MCF 10A (cell line): ENCODE measurements at regions of chr3 and their contacts with region 1.

Region 1: DNA sequence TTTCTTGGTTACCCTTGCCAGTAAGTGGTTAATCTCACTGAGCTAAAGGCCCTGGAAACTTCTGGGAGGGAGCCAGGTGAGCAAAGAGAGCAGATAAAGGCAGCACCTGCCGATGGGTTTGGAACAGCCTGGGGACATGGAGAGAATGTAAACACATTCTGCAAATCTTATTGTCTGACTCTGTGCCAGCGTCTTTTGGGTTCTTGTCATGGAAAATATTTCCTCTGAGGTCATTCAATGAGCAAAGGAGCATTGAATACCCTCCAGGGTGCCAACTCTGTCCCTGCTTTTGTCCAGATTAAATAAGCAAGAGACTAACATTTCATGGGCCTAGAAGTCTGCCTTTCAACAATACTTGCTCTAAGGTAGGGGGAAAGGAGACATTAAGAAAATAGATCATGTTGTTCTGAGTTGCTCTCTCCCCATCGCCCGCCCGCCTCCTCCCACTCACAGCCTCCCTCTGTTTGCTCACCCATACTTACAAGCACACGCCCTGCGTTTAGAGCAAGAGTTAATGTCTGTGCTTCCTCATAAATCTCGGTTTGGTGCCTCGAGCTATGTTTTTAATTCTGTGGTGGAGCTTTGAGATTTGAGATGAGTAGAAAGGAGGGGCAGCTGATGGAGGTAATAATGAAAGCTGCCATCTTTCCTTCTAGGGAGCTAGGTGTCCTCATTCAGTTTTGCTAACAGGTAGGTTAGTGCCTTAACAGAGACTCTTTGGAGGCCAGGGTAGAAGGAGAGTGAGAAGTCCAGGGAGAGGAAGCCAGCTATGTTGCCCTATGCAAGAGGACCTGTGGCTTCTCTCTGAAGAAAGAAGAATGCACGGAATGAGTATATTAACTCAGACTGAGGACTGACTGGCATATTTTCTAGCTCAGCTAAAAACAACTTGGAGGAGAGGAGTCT is 132.9 kb downstream of the TPRG1 start:
- DNase-seq: peak; percentile 96
- H3K4me3 Mint-ChIP-seq: peak overlapping the region; percentile 65
- H3K27ac Mint-ChIP-seq: peak overlapping the region; percentile 99
- H3K4me1 Mint-ChIP-seq: peaks cover 59% of the 10 kb centered on the region
- H3K27me3 Mint-ChIP-seq: no peaks in the 10 kb centered on the region
- CTCF ChIP-seq: no peak

Region 2: GRCh38 chr3:189148081-189148507 is 156.6 kb before region 1 on chr3:
- CTCF ChIA-PET with region 1: no interaction called
- POLR2A ChIA-PET with region 1: no interaction called
- intact Hi-C with region 1: no loop called
- DNase-seq: peak; percentile 73
- H3K4me3 Mint-ChIP-seq: no peak overlapping the region
- H3K27ac Mint-ChIP-seq: no peak overlapping the region
- H3K4me1 Mint-ChIP-seq: peaks cover 6% of the 10 kb centered on the region
- H3K27me3 Mint-ChIP-seq: no peaks in the 10 kb centered on the region
- CTCF ChIP-seq: peak; percentile 59

Region 3: DNA sequence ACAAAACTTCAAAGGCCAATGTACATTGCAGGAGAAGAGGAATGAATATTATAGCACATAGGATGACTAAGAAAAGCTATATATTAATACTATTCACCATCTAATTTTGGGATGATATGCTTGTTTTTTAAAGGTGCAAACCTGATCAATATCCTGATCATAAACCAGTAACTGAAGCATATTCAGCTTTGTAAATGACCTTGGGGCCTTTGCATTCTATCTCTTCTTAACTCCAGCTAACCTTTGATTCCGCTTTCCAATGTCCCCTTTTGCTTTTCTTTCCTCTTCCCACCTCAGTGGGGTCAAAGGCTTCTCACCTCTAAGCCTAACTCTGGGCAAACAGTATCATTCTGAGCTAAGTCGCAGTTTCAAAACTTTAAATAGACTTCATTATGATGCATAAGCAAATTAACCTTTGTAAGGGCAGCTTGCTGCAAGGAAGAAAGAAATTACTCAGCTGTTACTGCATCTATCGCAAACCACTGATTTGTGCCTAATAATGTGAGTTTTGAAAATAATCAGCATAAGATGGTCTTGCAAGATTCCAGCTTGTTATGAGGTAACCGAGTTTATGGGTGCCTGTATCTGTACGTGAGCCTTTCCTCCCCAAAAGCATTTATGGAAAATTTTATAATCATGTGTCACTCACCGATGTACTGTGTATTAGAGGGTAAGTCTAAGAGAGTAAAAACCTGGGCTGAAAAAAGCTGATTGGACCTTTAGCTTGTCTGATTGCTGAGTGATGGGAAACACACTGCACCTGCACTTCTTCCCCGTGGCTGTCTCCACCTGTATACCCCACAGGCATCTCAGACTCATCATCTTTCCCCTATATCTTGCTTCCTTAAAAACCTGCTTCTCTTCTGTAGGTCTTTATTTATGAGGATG is 16.1 kb before region 1 on chr3:
- CTCF ChIA-PET with region 1: no interaction called
- POLR2A ChIA-PET with region 1: interaction called, 17 read pairs
- intact Hi-C with region 1: no loop called
- DNase-seq: no peak
- H3K4me3 Mint-ChIP-seq: no peak overlapping the region
- H3K27ac Mint-ChIP-seq: no peak overlapping the region
- H3K4me1 Mint-ChIP-seq: peaks cover 18% of the 10 kb centered on the region
- H3K27me3 Mint-ChIP-seq: no peaks in the 10 kb centered on the region
- CTCF ChIP-seq: no peak

Region 4: GRCh38 chr3:189324538-189325138 is 19.9 kb after region 1 on chr3:
- CTCF ChIA-PET with region 1: interaction called, 3 read pairs
- POLR2A ChIA-PET with region 1: interaction called, 152 read pairs
- intact Hi-C with region 1: no loop called
- DNase-seq: peak; percentile 98
- H3K4me3 Mint-ChIP-seq: no peak overlapping the region
- H3K27ac Mint-ChIP-seq: peak overlapping the region; percentile 69
- H3K4me1 Mint-ChIP-seq: peaks cover 30% of the 10 kb centered on the region
- H3K27me3 Mint-ChIP-seq: no peaks in the 10 kb centered on the region
- CTCF ChIP-seq: no peak

Region 5: DNA sequence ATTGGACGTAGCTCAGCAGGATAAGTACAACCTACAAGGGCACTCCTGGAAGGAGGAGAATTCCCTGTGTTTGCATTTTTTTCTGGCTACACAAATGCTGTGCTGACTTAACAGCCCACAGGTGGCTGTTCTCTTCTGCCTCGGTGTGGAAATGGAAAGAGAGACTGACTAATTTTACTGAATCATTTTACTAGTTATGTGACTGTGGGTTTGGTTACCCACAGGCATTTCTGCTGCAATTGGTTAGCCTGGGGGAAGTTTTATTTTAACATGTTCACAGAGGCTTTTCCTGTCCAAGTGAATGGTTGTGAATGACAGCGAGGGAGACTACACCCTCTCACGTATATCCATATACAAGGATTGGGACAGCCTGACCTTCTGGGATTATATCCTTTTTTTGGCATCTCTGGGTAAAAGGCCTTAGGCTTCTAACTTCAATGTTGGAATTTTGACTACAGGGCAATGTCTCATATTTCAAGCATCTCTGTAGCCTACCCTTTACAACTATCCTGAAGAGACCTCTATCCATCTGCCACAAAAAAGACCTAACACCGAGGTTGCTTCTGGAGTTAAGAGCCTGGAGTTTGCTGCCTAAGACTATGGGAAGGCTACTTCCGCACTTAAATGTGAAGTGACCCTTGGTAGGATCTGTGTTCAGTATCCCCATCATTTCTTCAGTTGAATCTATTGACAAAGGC is 259.3 kb after region 1 on chr3:
- CTCF ChIA-PET with region 1: interaction called, 3 read pairs
- POLR2A ChIA-PET with region 1: interaction called, 15 read pairs
- intact Hi-C with region 1: no loop called
- DNase-seq: peak; percentile 92
- H3K4me3 Mint-ChIP-seq: no peak overlapping the region
- H3K27ac Mint-ChIP-seq: peak overlapping the region; percentile 69
- H3K4me1 Mint-ChIP-seq: peaks cover 26% of the 10 kb centered on the region
- H3K27me3 Mint-ChIP-seq: no peaks in the 10 kb centered on the region
- CTCF ChIP-seq: no peak

Region 6: DNA sequence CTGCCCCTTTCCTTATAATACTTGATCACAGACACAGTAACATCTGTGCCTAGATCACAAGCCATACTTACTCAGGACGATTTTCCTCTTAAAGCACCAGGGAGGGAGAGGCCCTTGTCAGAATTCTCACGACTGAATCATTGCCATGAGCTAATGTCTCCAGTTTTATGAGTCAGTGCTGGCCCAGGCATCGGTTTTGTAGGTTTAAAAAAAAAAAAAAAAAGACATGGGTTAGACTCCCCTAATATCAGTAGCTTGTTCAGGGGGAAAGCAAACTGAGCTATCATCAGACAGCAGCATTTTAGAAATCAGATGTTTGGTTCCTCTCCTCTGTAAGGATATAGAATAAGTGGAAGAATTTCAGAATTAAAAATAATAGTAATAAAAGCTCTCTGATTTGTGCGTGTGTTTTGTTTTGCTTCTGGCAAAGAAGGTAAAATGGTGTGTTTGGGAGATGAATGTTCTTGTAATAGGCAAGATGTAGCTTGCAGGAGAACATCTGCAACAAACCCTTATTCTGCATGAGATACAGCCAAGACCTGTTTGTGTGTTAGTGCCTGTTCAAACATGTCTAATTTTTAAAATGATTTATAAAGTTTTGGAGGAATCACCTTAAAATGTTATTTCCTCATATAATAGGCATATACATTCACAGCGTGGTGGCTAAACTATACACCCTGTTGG is 520.1 kb after region 1 on chr3:
- CTCF ChIA-PET with region 1: no interaction called
- POLR2A ChIA-PET with region 1: interaction called, 16 read pairs
- intact Hi-C with region 1: no loop called
- DNase-seq: peak; percentile 96
- H3K4me3 Mint-ChIP-seq: peak overlapping the region; percentile 42
- H3K27ac Mint-ChIP-seq: peak overlapping the region; percentile 83
- H3K4me1 Mint-ChIP-seq: peaks cover 31% of the 10 kb centered on the region
- H3K27me3 Mint-ChIP-seq: no peaks in the 10 kb centered on the region
- CTCF ChIP-seq: no peak